ENCODE measurements at regions of chr16 and their contacts with region 1.

Region 1: DNA sequence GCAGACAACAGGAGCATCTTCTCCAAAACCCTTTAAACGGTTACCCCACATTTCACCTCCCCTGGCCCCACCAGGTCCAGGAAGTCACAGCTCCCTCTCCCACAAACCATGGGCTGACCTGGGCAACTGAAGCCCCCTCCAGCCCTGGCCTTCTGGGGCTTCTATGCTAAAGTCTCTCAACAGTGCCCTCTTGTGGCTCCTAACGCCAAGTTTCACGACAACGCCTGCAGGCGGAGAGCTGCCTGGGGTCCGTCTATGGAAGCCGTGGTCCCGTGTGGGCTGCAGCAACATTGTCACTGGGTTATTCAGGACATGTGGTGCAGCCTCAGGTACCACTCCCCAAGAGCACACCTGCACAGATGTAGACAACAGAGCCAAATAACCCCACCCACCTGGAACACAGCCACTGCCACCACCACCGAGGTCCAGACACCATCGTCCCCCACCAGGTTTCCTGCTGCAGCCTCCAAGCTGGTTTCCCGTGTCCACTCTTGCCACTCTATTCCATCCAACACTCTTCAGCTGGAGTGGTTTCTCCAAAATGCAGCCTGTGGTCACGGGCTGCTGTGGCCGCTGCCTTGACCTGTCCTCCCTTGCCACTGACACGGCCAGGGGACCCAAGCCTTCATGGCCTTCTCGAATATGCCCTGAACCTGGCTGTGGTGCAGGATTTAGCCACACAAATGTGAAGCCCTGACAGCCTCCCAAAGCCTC is 19.1 kb downstream of the C16orf95 start:
- DNase-seq: peak; percentile 60
- H3K4me3 ChIP-seq: no peak overlapping the region
- H3K27ac ChIP-seq: no peak overlapping the region
- H3K4me1 ChIP-seq: no peaks in the 10 kb centered on the region
- H3K27me3 ChIP-seq: no peaks in the 10 kb centered on the region
- CTCF ChIP-seq: peak; percentile 84

Region 2: GRCh38 chr16:86984991-86985647 is 313.0 kb before region 1 on chr16:
- CTCF ChIA-PET with region 1: no interaction called
- POLR2A ChIA-PET with region 1: no interaction called
- intact Hi-C with region 1: no loop called
- DNase-seq: no peak
- H3K4me3 ChIP-seq: no peak overlapping the region
- H3K27ac ChIP-seq: no peak overlapping the region
- H3K4me1 ChIP-seq: no peaks in the 10 kb centered on the region
- H3K27me3 ChIP-seq: peaks cover 8% of the 10 kb centered on the region
- CTCF ChIP-seq: no peak

Region 3: GRCh38 chr16:87052506-87052905 is 245.6 kb before region 1 on chr16:
- CTCF ChIA-PET with region 1: no interaction called
- POLR2A ChIA-PET with region 1: no interaction called
- intact Hi-C with region 1: no loop called
- DNase-seq: no peak
- H3K4me3 ChIP-seq: no peak overlapping the region
- H3K27ac ChIP-seq: no peak overlapping the region
- H3K4me1 ChIP-seq: no peaks in the 10 kb centered on the region
- H3K27me3 ChIP-seq: no peaks in the 10 kb centered on the region
- CTCF ChIP-seq: no peak

Region 4: GRCh38 chr16:87062569-87063442 is 235.3 kb before region 1 on chr16:
- CTCF ChIA-PET with region 1: no interaction called
- POLR2A ChIA-PET with region 1: no interaction called
- intact Hi-C with region 1: loop called (anchors 10 kb)
- DNase-seq: peak; percentile 82
- H3K4me3 ChIP-seq: no peak overlapping the region
- H3K27ac ChIP-seq: no peak overlapping the region
- H3K4me1 ChIP-seq: no peaks in the 10 kb centered on the region
- H3K27me3 ChIP-seq: no peaks in the 10 kb centered on the region
- CTCF ChIP-seq: peak; percentile 90

Region 5: DNA sequence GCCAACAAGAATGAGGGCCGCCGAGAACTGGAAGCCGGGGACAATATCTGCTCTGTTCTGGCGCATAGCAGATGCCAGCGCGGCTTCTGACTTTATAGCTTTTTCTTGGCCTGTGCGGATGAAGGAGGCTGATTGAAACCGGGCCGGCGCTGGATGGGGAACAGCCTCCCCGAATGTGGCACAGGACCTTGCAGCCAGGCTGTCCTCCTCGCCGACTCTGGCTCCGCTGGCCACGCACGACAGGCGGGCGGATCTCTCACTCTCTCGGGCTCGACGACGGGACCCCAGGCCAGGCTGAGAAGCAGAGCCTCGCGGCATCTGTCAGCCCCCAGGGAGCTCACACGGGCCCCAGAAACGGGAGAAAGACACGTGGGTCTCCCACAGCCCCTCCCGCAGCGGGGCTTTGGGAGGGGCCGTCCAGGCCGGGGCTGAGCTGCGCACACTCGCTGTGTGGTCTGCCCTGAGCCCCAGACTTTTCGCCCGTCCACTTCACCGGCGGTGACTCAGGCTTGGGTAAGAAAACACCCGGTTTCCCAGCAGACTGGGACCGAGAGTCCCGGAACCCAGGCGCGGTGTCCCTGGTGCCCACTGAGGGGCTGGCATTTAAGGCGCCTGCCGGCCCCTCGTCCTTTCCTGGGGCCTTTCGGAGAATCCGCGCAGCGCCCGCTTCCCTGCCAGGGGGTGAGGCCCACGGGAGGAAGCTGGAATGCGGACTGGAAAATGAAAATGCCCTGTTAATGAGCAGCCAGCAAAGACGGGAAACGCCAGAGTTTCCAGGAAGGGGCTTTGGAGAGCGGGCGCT is 81.4 kb before region 1 on chr16:
- CTCF ChIA-PET with region 1: no interaction called
- POLR2A ChIA-PET with region 1: no interaction called
- intact Hi-C with region 1: no loop called
- DNase-seq: no peak
- H3K4me3 ChIP-seq: no peak overlapping the region
- H3K27ac ChIP-seq: no peak overlapping the region
- H3K4me1 ChIP-seq: no peaks in the 10 kb centered on the region
- H3K27me3 ChIP-seq: no peaks in the 10 kb centered on the region
- CTCF ChIP-seq: no peak

Region 6: GRCh38 chr16:87806013-87806602 is 508.0 kb after region 1 on chr16:
- CTCF ChIA-PET with region 1: no interaction called
- POLR2A ChIA-PET with region 1: interaction called, 18 read pairs
- intact Hi-C with region 1: no loop called
- DNase-seq: no peak
- H3K4me3 ChIP-seq: no peak overlapping the region
- H3K27ac ChIP-seq: peak overlapping the region; percentile 88
- H3K4me1 ChIP-seq: peaks cover 29% of the 10 kb centered on the region
- H3K27me3 ChIP-seq: no peaks in the 10 kb centered on the region
- CTCF ChIP-seq: no peak